Activated CD4-positive, alpha-beta T cell treated with anti-CD3 and anti-CD28 coated beads for 36 hours (primary cell): ENCODE measurements at regions of chr2 and their contacts with region 1.

Region 1: DNA sequence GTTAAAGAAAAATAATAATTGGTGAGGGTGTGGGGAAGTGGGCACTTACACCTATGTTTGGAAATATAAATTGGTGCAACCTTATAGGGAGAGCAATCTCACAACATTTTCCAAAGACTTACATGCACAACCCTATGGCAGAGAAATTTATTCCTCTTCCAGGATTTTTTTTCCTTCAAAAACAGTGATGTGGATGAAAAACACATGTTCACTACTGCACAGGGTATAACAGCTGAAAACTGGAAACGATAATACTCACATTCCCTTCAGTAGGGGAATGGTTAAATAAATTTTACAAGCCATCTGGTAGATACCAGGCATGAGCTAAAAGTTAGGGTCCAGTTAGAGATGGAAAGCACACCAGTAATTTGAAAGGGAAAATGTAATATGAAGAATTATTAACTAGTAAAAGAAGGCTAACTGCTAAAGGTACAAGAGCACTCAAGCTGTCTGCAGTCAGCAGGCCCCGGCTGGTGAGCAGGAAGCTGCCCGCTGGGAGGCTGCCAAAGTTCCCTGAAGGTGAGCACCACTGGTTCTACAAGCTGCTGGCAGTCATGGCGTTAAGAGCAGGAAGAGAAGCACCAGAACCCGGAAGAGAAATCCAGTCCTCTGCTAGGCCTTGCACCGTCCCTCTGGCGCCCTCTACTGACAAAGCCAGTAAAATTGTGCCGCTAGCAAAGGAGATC is 28.4 kb upstream of the CASP8 start:
- DNase-seq: peak; percentile 96
- ATAC-seq: peak; percentile 47
- H3K4me3 Mint-ChIP-seq: peak overlapping the region; percentile 68
- H3K27ac Mint-ChIP-seq: peak overlapping the region; percentile 78
- H3K4me1 Mint-ChIP-seq: peaks cover 49% of the 10 kb centered on the region
- H3K27me3 Mint-ChIP-seq: no peaks in the 10 kb centered on the region

Region 2: DNA sequence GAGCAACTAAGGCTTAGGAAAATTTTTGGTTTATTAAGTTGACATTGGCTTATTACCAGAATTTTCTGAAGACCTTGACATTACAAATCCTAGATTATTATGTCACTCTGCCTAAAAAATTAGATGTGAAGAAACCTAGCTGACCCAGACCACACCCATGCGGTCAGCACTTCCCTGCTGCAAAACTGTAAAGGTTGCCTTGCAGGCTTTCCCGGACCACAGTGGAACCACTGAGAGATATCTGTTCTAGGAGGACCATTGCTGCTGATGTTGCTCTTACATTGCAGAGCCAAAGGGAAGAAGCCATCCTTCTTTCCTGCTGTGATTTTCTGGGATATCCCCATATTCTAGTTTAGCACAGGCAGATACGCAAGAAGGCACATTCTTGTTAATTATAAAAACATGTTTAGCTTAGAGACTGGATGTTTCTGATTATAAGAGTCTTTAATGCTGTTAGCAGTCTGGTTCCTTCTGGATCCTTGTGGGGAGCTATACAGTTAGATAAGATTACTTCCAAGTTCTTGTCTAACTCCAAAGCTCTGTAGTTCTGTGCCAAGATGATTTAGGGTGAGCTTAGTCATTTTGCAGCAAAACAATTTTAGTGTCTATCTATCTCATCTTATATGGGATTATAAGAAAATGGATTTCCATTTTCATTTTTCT is 575.9 kb before region 1 on chr2:
- CTCF ChIA-PET with region 1: no interaction called
- POLR2A ChIA-PET with region 1: no interaction called
- intact Hi-C with region 1: no loop called
- DNase-seq: no peak
- ATAC-seq: no peak
- H3K4me3 Mint-ChIP-seq: no peak overlapping the region
- H3K27ac Mint-ChIP-seq: no peak overlapping the region
- H3K4me1 Mint-ChIP-seq: no peaks in the 10 kb centered on the region
- H3K27me3 Mint-ChIP-seq: peaks cover 2% of the 10 kb centered on the region

Region 3: GRCh38 chr2:200944467-200945394 is 287.2 kb before region 1 on chr2:
- CTCF ChIA-PET with region 1: interaction called, 3 read pairs
- POLR2A ChIA-PET with region 1: no interaction called
- intact Hi-C with region 1: loop called in 1 of 2 experiments (anchors 5 kb)
- DNase-seq: peak; percentile 89
- ATAC-seq: peak; percentile 88
- H3K4me3 Mint-ChIP-seq: peak overlapping the region; percentile 18
- H3K27ac Mint-ChIP-seq: peak overlapping the region; percentile 49
- H3K4me1 Mint-ChIP-seq: peaks cover 27% of the 10 kb centered on the region
- H3K27me3 Mint-ChIP-seq: no peaks in the 10 kb centered on the region

Region 4: GRCh38 chr2:201130524-201131186 is 101.3 kb before region 1 on chr2:
- CTCF ChIA-PET with region 1: interaction called, 3 read pairs
- POLR2A ChIA-PET with region 1: interaction called, 4 read pairs
- intact Hi-C with region 1: loop called in 1 of 2 experiments (anchors 1 kb)
- DNase-seq: peak; percentile 62
- ATAC-seq: peak; percentile 48
- H3K4me3 Mint-ChIP-seq: peak overlapping the region; percentile 81
- H3K27ac Mint-ChIP-seq: peak overlapping the region; percentile 95
- H3K4me1 Mint-ChIP-seq: peaks cover 65% of the 10 kb centered on the region
- H3K27me3 Mint-ChIP-seq: no peaks in the 10 kb centered on the region

Region 5: DNA sequence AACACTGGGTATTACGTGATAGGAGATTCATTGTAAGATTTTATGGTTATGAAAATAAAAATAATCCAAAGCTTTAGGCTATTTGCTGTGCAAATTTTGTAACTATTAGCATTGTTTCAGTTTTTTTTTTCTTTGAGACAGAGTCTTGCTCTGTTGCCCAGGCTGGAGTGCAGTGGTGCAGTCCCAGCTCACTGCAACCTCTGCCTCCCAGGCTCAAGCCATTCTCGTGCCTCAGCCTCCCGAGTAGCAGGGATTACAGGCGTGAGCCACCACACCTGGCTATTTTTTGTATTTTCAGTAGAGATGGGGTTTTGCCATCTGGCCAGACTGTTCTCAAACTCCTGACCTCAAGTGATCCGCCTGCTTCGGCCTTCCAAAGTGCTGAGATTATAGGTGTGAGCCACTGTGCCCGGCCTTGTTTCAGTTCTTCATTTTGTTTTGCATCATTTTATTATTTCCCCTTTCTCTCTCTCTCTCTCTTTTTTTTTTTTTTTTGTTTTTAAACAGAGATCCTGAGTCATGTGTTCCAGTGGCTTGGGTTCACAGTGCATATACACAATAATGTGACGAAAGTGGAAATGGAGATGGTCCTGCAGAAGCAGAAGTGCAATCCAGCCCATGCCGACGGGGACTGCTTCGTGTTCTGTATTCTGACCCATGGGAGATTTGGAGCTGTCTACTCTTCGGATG is 23.2 kb before region 1 on chr2:
- CTCF ChIA-PET with region 1: interaction called, 20 read pairs
- POLR2A ChIA-PET with region 1: interaction called, 6 read pairs
- intact Hi-C with region 1: loop called in 1 of 2 experiments (anchors 2 kb)
- DNase-seq: no peak
- ATAC-seq: no peak
- H3K4me3 Mint-ChIP-seq: no peak overlapping the region
- H3K27ac Mint-ChIP-seq: no peak overlapping the region
- H3K4me1 Mint-ChIP-seq: peaks cover 25% of the 10 kb centered on the region
- H3K27me3 Mint-ChIP-seq: no peaks in the 10 kb centered on the region

Region 6: DNA sequence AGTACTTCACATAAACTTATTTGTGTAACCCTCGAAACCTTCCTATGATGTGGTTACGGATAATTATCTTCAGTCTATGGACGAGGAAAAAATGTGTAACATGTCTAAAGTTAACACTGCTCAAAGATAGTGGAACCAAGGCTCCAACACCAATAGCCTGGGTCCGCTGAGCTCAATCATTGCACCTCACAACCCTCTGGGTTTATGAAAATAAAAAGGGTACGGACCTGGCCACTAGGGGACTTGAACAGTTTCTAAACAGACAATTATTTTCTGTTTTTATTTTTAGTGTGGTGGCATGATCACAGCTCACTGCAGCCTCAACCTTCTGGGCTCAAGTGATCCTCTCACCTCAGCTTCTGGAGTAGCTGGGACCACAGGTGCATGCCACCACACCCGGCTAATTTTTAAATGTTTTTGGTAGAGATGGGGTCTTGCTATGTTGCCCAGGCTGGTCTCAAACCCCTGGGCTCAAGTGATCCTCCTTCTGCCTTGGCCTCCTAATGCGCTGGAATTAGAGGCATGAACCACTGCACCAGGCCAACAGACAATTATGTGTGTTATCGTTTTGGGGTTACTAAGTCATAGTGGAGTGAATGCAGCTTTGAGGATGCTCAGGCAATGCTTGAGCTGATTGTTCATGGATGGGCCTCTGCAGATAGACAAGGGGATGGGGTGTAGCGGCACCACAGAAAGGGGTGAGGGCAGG is 38.5 kb after region 1 on chr2:
- CTCF ChIA-PET with region 1: interaction called, 23 read pairs
- POLR2A ChIA-PET with region 1: interaction called, 10 read pairs
- intact Hi-C with region 1: loop called (anchors 5 kb)
- DNase-seq: no peak
- ATAC-seq: no peak
- H3K4me3 Mint-ChIP-seq: no peak overlapping the region
- H3K27ac Mint-ChIP-seq: peak overlapping the region; percentile 38
- H3K4me1 Mint-ChIP-seq: peaks cover 78% of the 10 kb centered on the region
- H3K27me3 Mint-ChIP-seq: no peaks in the 10 kb centered on the region

Region 7: DNA sequence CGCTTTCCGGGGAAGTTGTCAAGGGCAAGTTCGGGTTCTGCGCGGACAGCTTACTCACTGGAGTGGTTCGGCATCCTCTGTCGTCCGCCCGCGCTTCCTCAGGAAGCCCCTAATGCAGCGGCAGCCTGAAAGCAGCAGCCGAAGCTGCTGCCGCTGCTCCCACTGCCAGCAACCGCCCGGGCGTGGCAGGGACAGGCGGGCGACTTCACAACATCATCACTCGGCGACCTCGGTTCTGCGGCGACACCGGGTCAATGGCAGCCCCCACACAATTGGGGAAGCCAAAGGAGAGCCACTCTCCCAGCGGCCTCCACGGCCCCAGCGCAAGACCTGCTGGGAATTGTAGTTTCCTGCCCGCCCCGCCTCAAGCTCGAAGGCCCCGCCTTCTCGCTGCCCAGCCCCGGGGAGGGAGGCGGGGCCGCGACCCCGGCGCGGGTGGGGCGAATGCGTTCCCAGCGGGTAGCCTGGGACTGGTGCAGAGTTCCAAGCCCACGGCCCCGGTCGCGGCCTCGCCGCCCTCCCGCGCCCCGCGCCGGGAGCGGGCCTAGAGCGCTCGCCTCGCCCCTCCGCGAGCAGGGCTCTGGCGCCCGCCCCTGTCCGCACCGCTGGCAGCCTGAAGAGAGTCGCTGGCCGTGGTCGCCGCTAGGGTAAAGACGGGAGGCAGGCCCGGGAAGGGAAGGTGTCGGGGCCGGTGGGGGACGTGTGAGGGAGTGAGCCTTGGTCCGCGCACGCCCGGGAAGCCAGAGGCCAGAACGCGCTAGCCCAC is 219.6 kb after region 1 on chr2 and contains the starts of genes STRADB and TRAK2:
- CTCF ChIA-PET with region 1: interaction called, 11 read pairs
- POLR2A ChIA-PET with region 1: interaction called, 9 read pairs
- intact Hi-C with region 1: loop called (anchors 1 to 2 kb)
- DNase-seq: peak; percentile 98
- ATAC-seq: peak; percentile 91
- H3K4me3 Mint-ChIP-seq: peak within 1 kb of the TSS; percentile 95
- H3K27ac Mint-ChIP-seq: peak within 1 kb of the TSS; percentile 97
- H3K4me1 Mint-ChIP-seq: peaks cover 44% of the 10 kb centered on the region
- H3K27me3 Mint-ChIP-seq: no peaks in the 10 kb centered on the region
- total RNA-seq, gene STRADB: 20.5 to 21.8 TPM
- total RNA-seq, gene TRAK2: 22.5 to 25.6 TPM

Region 8: GRCh38 chr2:202178342-202178958 is 946.5 kb after region 1 on chr2:
- CTCF ChIA-PET with region 1: interaction called, 3 read pairs
- POLR2A ChIA-PET with region 1: no interaction called
- intact Hi-C with region 1: loop called (anchors 5 kb)
- DNase-seq: peak; percentile 71
- ATAC-seq: peak; percentile 84
- H3K4me3 Mint-ChIP-seq: no peak overlapping the region
- H3K27ac Mint-ChIP-seq: no peak overlapping the region
- H3K4me1 Mint-ChIP-seq: peaks cover 2% of the 10 kb centered on the region
- H3K27me3 Mint-ChIP-seq: peaks cover 3% of the 10 kb centered on the region